Gastrocnemius medialis (tissue), 4 donors: ENCODE measurements at regions of chr10 and their contacts with region 1.

Region 1: DNA sequence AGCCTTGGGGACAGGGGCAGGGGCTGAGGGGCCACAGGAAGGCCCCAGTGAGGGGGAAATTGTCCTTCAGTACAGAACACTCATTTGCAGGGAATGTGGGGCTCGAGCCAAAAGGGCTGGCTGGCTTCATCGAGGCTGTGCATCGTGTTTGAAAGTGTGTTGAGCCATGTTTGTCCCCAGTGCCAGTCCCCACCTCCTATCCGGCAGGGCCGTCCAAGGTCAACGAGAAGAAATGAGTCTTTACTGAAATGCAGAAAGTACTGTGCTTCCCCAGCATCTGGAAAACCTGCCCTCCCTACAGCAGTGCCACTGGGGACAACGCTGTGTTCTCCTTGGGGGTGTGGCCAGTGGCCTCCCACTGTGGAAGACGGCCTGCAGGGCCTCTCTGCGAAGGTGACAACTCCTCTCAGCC is 214.1 kb downstream of the KLF6 start:
- DNase-seq: peak; percentile 15 to 65
- ATAC-seq: peak in 1 of 2 donors; percentile 29
- H3K4me3 ChIP-seq: no peak overlapping the region
- H3K27ac ChIP-seq: peak overlapping the region; percentile 16 to 63 (median 36)
- H3K4me1 ChIP-seq: peaks cover 42 to 63% of the 10 kb centered on the region in 2 donors
- H3K27me3 ChIP-seq: no peaks in the 10 kb centered on the region
- CTCF ChIP-seq: no peak
- POLR2A ChIP-seq: no peak

Region 2: DNA sequence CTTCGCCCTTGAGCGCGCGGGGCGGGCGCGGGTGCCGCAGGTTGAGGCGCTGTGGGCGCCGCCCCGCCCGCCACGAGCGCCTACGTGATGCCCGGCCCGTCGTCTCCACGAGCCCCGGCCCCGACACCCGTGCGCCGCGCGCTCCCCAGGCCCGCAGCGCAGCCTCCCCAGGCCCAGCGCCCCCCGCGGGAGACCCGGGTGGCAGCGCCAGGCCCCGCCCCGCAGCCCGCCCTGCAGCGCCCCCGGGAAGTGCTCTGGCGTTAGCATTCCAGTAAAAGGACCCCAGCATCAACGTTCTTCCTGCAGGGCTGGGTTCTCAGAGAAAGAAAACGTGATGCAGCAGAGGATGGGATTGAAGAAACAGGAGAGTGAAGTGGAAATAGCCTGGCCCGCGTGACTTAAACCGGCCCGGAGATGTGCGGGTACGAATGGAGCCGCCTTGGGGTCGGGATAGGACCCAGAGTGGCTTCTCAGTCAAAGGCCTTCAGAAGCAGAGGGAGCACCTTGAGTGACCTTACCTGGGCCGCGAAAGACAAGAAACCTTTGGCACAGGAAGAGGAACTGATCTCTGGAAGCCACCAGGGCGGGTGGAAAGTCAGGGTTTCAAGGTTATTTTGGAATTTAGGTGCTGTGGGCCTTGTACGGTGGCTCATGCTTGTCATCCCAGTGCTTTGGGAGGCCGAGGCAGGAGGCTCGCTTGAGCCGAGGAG is 501.7 kb before region 1 on chr10:
- in situ Hi-C with region 1: no loop called
- intact Hi-C with region 1: no loop called
- DNase-seq: no peak
- ATAC-seq: no peak
- H3K4me3 ChIP-seq: peak overlapping the region; percentile 66 to 84 (median 74)
- H3K27ac ChIP-seq: peak overlapping the region in 1 of 4 donors; percentile 51
- H3K4me1 ChIP-seq: peaks cover 0 to 23% of the 10 kb centered on the region in 2 donors
- H3K27me3 ChIP-seq: peaks cover 17 to 33% (median 21%) of the 10 kb centered on the region in 3 donors
- CTCF ChIP-seq: no peak
- POLR2A ChIP-seq: no peak

Region 3: GRCh38 chr10:3714531-3714930 is 143.7 kb after region 1 on chr10:
- in situ Hi-C with region 1: no loop called
- intact Hi-C with region 1: loop called (anchors 10 kb)
- DNase-seq: no peak
- ATAC-seq: no peak
- H3K4me3 ChIP-seq: no peak overlapping the region
- H3K27ac ChIP-seq: no peak overlapping the region
- H3K4me1 ChIP-seq: peaks cover 0 to 2% of the 10 kb centered on the region in 2 donors
- H3K27me3 ChIP-seq: no peaks in the 10 kb centered on the region
- CTCF ChIP-seq: no peak
- POLR2A ChIP-seq: no peak

Region 4: GRCh38 chr10:3749600-3749999 is 178.7 kb after region 1 on chr10:
- in situ Hi-C with region 1: no loop called
- intact Hi-C with region 1: loop called (anchors 5 kb)
- DNase-seq: peak; percentile 82 to 87
- ATAC-seq: peak; percentile 92 to 94
- H3K4me3 ChIP-seq: peak overlapping the region; percentile 13 to 60 (median 42)
- H3K27ac ChIP-seq: peak overlapping the region; percentile 73 to 93 (median 90)
- H3K4me1 ChIP-seq: peaks cover 34 to 41% of the 10 kb centered on the region in 2 donors
- H3K27me3 ChIP-seq: no peaks in the 10 kb centered on the region
- CTCF ChIP-seq: no peak
- POLR2A ChIP-seq: peak; percentile 88

Region 5: DNA sequence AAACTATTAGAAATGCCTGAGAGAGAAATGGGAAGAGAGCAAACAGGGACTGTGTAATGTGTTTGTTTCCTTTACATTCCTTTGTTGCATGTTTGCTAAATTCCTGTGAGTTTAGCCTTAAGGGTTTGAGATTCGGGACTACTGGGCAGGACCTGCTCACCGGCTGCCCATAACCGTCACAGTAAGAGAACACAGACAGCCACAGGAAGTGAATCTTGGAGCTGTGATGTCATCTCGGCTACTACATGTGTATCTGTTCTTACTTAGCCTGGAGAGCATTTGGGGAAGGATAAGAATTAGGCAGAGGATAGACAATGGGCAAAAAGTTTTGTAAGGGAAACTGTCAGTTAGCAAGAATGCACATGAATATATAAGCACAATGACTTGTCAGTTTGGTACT is 699.3 kb after region 1 on chr10:
- in situ Hi-C with region 1: no loop called
- intact Hi-C with region 1: no loop called
- DNase-seq: peak in 1 of 2 donors; percentile 29
- ATAC-seq: peak in 1 of 2 donors; percentile 49
- H3K4me3 ChIP-seq: no peak overlapping the region
- H3K27ac ChIP-seq: no peak overlapping the region
- H3K4me1 ChIP-seq: peaks cover 0 to 5% of the 10 kb centered on the region in 2 donors
- H3K27me3 ChIP-seq: no peaks in the 10 kb centered on the region
- CTCF ChIP-seq: no peak
- POLR2A ChIP-seq: no peak

Region 6: DNA sequence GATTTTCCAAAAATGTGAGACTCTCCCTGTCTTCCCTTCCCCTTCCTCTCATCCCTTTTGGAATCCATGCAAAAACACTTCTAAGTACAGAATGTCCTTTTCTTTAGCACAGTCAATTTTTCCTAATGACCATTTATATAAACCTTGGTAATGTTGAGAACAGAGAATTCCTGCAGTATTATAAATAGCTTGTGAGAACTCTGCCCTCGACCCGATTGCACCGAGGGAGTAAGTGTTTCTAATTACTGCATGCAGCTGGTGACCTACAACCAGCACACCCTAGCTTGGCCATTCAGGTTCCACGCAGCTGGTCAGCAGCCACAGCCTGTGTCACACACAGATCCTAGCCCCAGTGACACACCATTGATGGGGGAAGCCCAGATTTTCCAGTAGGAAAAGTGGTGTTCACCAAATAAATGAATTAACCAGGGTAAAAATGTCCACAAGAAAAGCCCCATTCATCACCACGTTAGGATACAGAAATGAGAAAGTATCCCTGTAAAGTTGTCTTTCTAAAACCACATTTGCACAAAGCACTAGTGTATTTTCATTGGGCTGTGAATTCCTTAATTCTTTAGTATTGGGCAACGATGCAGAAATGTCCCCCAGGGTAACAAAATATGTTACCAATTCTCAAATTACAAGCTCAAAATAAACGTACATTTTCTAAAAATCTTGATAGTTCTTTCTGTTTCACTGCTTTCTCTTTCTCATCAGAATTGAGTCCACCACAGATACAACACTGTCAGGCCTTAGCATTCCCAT is 713.2 kb after region 1 on chr10:
- in situ Hi-C with region 1: no loop called
- intact Hi-C with region 1: no loop called
- DNase-seq: peak; percentile 63 to 68
- ATAC-seq: peak; percentile 79
- H3K4me3 ChIP-seq: no peak overlapping the region
- H3K27ac ChIP-seq: peak overlapping the region; percentile 38 to 75 (median 64)
- H3K4me1 ChIP-seq: peaks cover 19 to 35% of the 10 kb centered on the region in 2 donors
- H3K27me3 ChIP-seq: no peaks in the 10 kb centered on the region
- CTCF ChIP-seq: no peak
- POLR2A ChIP-seq: no peak